Activated T-helper 1 cell treated with anti-CD3 and anti-CD28 coated beads, Interleukin-12 subunit alpha, Interleukin-12 subunit beta, Interleukin-2, Interleukin-4 antibody, amounts not matched to agents 30 ng/mL and 10 ng/mL and 1 ng/mL, durations not matched to agents 14 hours and 24 hours and 36 hours (primary cell): ENCODE measurements at regions of chr14 and their contacts with region 1.

Region 1: DNA sequence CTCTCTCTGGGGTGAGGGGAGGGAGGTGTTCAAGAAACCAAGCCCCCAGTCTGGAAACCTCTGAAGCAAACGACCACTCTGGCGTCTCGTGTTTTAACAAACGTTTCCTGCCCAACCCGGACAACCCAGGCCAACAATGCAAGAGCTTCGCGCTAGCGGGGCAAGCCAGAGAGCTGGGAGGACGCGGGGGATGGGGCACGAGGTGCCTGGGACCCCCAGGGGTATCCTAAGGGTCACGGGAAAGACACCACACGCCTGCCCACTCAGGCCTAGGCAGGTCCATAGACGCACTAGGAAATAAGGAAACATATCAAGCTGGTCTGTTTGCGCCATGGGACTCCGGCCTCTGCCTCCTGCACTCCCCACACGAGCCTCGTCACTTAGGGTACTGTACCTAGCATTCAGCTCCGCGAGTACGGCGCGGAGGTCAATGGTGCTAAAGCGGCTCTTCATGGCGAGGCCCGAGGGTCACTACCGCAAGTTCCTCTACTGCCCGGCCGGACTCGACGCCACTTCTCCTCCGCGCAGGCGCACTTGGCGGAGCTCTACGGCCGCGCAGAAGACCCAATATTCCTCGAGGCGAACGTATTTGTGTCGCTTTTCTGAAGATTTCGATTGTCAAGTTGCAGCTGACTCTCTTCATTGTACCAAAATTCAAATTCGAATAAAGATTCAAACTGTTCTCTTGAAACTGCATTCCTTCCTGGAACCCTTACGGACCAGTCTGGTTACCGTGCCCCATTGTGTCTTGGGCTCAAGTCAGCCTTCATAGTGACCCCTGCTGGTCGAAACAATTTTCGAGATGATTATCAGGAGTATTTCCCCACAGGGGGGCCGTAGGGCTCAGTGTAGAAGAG is at the start of gene NEMF:
- DNase-seq: peak; percentile 78
- H3K4me3 Mint-ChIP-seq: peak within 1 kb of the TSS; percentile 96
- H3K27ac Mint-ChIP-seq: peak within 1 kb of the TSS; percentile 97
- H3K4me1 Mint-ChIP-seq: peaks cover 50% of the 10 kb centered on the region
- H3K27me3 Mint-ChIP-seq: no peaks in the 10 kb centered on the region
- total RNA-seq, gene NEMF: 79.9 and 89.3 TPM in 2 replicates

Region 2: GRCh38 chr14:49620182-49621113 is 232.1 kb before region 1 on chr14 and contains the starts of genes MGAT2 and RPL36AL:
- intact Hi-C with region 1: loop called (anchors 2 kb)
- DNase-seq: peak; percentile 96
- H3K4me3 Mint-ChIP-seq: peak within 1 kb of the TSS; percentile 98
- H3K27ac Mint-ChIP-seq: peak within 1 kb of the TSS; percentile 98
- H3K4me1 Mint-ChIP-seq: peaks cover 53% of the 10 kb centered on the region
- H3K27me3 Mint-ChIP-seq: peaks cover 2% of the 10 kb centered on the region
- total RNA-seq, gene MGAT2: 57.5 and 58.3 TPM in 2 replicates
- total RNA-seq, gene RPL36AL: 224 and 237 TPM in 2 replicates

Region 3: GRCh38 chr14:49692811-49693734 is 159.5 kb before region 1 on chr14 and contains the start of gene KLHDC1:
- intact Hi-C with region 1: loop called (anchors 5 kb)
- DNase-seq: peak; percentile 74
- H3K4me3 Mint-ChIP-seq: peak within 1 kb of the TSS; percentile 87
- H3K27ac Mint-ChIP-seq: peak within 1 kb of the TSS; percentile 94
- H3K4me1 Mint-ChIP-seq: peaks cover 19% of the 10 kb centered on the region
- H3K27me3 Mint-ChIP-seq: peaks cover 1% of the 10 kb centered on the region
- total RNA-seq, gene KLHDC1: 0.93 and 1.9 TPM in 2 replicates

Region 4: DNA sequence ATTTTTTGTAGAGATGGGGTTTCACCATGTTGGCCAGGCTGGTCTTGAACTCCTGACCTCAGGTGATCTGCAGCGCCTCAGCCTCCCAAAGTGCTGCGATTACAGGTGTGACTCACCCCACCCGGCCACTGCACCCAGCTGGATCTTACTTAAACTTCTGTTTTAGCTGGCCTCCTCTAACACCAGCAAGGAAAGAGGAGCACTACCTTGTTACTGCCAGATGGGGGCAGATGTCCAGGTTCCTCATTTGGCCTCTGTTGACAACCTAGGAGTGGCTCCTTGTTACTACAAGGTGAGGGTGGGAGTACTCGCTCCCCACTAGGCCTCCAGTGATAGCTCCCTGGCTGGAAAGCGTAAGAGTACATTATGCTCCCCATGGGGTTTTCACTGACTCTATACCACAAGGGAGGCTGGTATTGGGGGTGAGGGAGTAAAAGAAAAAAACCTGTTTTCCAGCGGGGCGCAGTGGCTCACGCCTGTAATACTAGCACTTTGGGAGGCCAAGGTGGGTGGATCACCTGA is 27.2 kb after region 1 on chr14:
- intact Hi-C with region 1: no loop called
- DNase-seq: peak; percentile 45
- H3K4me3 Mint-ChIP-seq: no peak overlapping the region
- H3K27ac Mint-ChIP-seq: peak overlapping the region; percentile 61
- H3K4me1 Mint-ChIP-seq: peaks cover 34% of the 10 kb centered on the region
- H3K27me3 Mint-ChIP-seq: peaks cover 3% of the 10 kb centered on the region

Region 5: GRCh38 chr14:50260511-50260910 is 408.0 kb after region 1 on chr14:
- intact Hi-C with region 1: loop called (anchors 1 kb)
- DNase-seq: peak; percentile 11
- H3K4me3 Mint-ChIP-seq: no peak overlapping the region
- H3K27ac Mint-ChIP-seq: no peak overlapping the region
- H3K4me1 Mint-ChIP-seq: peaks cover 4% of the 10 kb centered on the region
- H3K27me3 Mint-ChIP-seq: no peaks in the 10 kb centered on the region

Region 6: GRCh38 chr14:50347521-50347920 is 495.0 kb after region 1 on chr14:
- intact Hi-C with region 1: no loop called
- DNase-seq: no peak
- H3K4me3 Mint-ChIP-seq: no peak overlapping the region
- H3K27ac Mint-ChIP-seq: no peak overlapping the region
- H3K4me1 Mint-ChIP-seq: peaks cover 27% of the 10 kb centered on the region
- H3K27me3 Mint-ChIP-seq: peaks cover 18% of the 10 kb centered on the region